Posterior cingulate gyrus (tissue), 11 donors: ENCODE measurements at regions of chr3 and their contacts with region 1.

Region 1: DNA sequence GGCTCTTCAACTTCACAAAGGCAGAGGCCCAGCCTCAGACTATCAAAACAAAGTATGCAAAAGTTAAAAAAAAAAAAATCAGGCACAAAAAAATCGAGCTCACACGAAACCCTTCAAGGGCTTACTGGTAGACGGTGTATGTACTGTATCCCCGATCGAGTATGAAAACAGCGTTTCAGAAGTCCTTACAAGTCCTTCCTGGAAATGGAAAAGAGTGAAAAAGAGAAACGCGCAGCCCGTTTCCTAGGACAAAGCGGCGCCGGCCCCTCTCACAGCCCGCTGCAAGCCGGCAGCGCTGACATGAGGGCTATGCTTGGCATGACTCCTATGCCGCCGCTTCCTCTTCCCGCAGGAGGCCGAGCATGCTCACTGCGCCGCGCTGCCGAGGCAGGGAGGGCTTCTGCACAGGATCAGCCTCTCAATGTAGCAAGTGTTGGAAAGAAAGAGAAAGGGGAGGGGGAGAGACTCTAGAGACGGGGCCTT is at the start of gene VGLL4:
- DNase-seq: peak; percentile 86 to 98 (median 92)

Region 2: GRCh38 chr3:11271986-11272904 is 371.4 kb before region 1 on chr3 and contains the start of gene ATG7:
- intact Hi-C with region 1: loop called (anchors 10 kb)
- DNase-seq: peak; percentile 92 to 99 (median 96)

Region 3: GRCh38 chr3:11568503-11569155 is 75.0 kb before region 1 on chr3:
- intact Hi-C with region 1: loop called (anchors 10 kb)
- DNase-seq: peak; percentile 67 to 97 (median 79)

Region 4: GRCh38 chr3:11591391-11592282 is 52.0 kb before region 1 on chr3:
- intact Hi-C with region 1: loop called (anchors 2 kb)
- DNase-seq: peak; percentile 62 to 95 (median 70)

Region 5: GRCh38 chr3:11757441-11757875 is 113.8 kb after region 1 on chr3:
- intact Hi-C with region 1: no loop called
- DNase-seq: no peak